K562 (cell line): ENCODE measurements at regions of chr21 and their contacts with region 1.

Region 1: DNA sequence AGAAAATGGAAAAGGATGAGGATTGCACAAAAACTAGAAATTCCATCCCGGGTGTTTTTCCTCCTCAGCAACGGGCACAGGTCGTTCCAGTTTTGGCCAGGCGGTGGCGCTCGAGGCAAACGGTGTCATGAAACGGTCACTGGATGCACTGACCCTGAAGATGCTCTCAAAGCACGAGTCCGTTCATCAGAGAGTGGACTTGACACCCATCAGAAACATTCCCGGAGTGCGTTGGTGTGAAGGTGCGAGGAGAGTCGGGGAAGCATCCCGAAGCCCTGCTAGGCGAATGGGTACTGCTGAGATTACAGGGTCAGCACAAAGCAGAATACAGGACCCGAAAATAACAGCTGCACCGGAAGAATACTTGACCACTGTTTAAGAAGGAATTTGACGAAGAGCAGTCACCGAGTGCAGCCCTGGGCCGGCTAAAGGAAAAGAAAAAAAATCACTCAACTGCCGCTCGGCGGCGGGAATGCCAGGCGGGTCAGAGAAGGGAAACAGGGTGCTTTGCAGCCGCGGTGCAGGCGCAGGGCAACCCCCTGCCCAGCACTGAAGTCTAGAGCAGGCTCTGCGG is 71.7 kb upstream of the ETS2 start:
- DNase-seq: peak; percentile 75 to 82 (median 78)
- ATAC-seq: peak; percentile 96
- H3K4me3 ChIP-seq: no peak overlapping the region
- H3K27ac ChIP-seq: no peak overlapping the region
- H3K4me1 ChIP-seq: no peaks in the 10 kb centered on the region
- H3K27me3 ChIP-seq: peaks cover 7% of the 10 kb centered on the region in 2 experiments; a peak in 4 of 5 replicates
- CTCF ChIP-seq: peak; percentile 90 to 97 (median 96)
- EP300 ChIP-seq: no peak
- POLR2A ChIP-seq: no peak
- RAD21 ChIP-seq: peak; percentile 97 to 99

Region 2: DNA sequence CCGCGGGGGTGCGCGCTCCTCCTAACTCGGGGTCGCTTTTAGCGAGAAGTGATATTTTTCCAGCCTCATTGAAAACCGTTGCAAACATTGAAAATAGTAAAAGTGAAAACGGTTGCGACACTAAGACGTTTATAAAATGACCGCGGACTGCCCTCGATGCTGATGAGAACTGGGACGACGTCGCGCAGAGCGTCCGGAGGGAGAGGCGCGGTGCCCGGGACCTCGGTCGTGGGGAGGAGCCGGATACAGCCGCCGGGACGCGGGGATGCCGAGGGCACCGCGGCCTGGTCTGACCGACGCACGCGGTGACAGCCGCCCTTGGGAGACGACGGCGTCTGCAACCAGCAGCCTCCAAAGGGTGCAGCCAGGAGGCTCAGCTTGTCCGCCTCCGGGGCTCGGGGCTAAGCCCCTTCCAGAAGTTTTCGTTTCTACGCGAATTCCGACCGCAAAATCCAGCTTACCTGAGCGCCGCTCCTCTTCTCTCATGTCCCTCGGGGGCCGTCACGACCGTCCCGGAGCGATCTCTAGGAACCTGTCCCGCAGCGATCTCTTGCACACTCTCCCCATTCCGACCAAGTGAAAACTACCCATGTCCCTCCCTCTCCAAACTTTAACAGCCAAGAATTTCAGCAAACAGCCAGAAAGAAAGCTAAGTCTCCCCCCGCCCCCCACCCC is 72.7 kb before region 1 on chr21:
- CTCF ChIA-PET with region 1: no interaction called
- POLR2A ChIA-PET with region 1: no interaction called
- in situ Hi-C with region 1: no loop called
- intact Hi-C with region 1: no loop called
- DNase-seq: no peak
- ATAC-seq: no peak
- H3K4me3 ChIP-seq: no peak overlapping the region
- H3K27ac ChIP-seq: no peak overlapping the region
- H3K4me1 ChIP-seq: no peaks in the 10 kb centered on the region
- H3K27me3 ChIP-seq: peaks cover 16 to 21% of the 10 kb centered on the region in 2 experiments
- CTCF ChIP-seq: no peak
- EP300 ChIP-seq: no peak
- POLR2A ChIP-seq: no peak
- RAD21 ChIP-seq: no peak

Region 3: GRCh38 chr21:38797470-38797869 is 63.4 kb after region 1 on chr21:
- CTCF ChIA-PET with region 1: no interaction called
- POLR2A ChIA-PET with region 1: no interaction called
- in situ Hi-C with region 1: no loop called
- intact Hi-C with region 1: loop called (anchors 2 kb)
- DNase-seq: peak; percentile 74 to 89 (median 81)
- ATAC-seq: peak; percentile 82
- H3K4me3 ChIP-seq: no peak overlapping the region
- H3K27ac ChIP-seq: peak overlapping the region; percentile 2; the same call in 2 of the 3 replicates
- H3K4me1 ChIP-seq: peaks cover 20 to 38% of the 10 kb centered on the region in 2 experiments
- H3K27me3 ChIP-seq: no peaks in the 10 kb centered on the region
- CTCF ChIP-seq: no peak
- EP300 ChIP-seq: no peak
- POLR2A ChIP-seq: no peak
- RAD21 ChIP-seq: peak in 1 of 2 experiments; percentile 20; a peak in 1 of 4 replicates

Region 4: DNA sequence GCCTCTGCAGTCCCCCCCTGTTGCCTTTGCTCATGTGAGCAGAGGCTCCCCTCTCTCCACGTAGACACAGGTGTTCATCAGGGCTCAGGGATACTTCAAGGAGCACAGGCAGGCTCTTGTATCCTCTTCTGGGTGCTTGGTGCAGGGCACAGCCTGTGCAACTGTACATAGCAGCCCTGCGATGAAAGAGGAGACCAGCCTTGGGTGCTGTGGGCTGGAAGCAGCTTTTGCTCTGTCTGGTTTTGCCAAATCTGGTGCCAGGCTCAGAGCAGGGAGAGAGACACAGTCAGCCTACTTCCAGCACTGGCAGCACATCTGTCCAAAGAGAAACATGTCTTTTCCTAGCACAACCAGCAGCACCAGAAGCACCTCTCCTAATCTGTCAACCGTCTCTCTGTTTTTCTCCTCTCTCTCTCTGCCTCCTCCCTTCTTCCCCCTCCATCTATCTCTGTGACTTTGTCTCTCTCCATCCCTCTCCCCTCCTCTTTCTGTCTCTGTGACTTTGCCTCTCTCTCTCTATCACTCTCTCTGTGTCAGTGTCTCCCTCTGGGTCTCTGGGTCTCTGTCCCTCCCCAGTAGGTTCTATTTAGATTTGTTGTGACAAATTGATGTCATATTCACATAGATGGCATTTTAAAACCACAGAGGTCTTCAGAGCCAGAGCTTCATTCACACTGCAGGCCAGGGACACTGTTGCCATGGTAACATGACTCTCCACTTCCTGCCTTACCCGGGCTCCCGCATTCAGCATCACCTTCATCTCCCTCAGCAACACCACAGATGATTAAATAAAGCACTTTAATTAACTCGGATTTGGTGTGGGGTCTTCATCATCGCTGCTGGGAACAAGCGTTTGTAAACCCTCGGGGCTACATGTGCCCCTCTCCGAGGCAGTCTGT is 204.0 kb after region 1 on chr21:
- CTCF ChIA-PET with region 1: no interaction called
- POLR2A ChIA-PET with region 1: no interaction called
- in situ Hi-C with region 1: no loop called
- intact Hi-C with region 1: loop called (anchors 10 kb)
- DNase-seq: no peak
- ATAC-seq: no peak
- H3K4me3 ChIP-seq: no peak overlapping the region
- H3K27ac ChIP-seq: no peak overlapping the region
- H3K4me1 ChIP-seq: no peaks in the 10 kb centered on the region
- H3K27me3 ChIP-seq: peaks cover 59 to 61% of the 10 kb centered on the region in 2 experiments
- CTCF ChIP-seq: no peak
- EP300 ChIP-seq: no peak
- POLR2A ChIP-seq: no peak
- RAD21 ChIP-seq: no peak

Region 5: DNA sequence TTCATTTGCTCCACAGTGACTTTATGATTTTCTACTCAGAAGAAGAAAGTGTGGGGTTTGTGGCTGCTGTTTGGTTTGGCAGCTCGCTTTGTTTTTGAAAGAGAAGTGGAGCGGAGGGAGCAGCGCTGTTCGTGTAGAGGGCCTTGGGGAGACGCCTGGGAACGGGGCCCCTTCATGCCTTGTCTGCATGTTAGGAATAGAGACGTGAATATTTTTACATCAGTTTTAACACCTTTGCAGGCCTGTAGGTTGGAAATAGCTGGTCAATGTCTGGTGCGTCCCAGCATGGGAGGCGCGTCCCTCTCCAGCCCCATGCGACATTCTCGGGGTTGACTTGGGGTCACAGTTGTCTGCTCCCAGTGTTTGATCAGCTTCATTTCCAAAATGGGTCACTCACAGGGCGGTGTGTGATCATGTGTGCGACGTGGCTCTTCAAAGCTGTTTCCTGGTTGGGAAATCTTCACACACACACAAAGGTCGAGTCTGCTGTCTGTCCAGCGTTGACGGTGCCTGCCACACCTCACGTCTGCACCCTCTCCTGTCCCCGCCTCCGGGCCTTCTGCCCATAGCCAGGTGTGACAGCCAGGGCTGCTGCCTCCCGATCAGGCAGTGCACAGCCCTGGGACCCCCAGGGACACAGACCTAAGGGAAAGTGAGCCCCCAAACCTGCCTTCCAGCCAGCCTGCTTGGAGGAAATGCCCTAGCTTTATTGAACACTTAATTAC is 300.0 kb after region 1 on chr21:
- CTCF ChIA-PET with region 1: no interaction called
- POLR2A ChIA-PET with region 1: no interaction called
- in situ Hi-C with region 1: no loop called
- intact Hi-C with region 1: loop called (anchors 10 kb)
- DNase-seq: no peak
- ATAC-seq: no peak
- H3K4me3 ChIP-seq: no peak overlapping the region
- H3K27ac ChIP-seq: no peak overlapping the region
- H3K4me1 ChIP-seq: peaks cover 0 to 7% of the 10 kb centered on the region in 2 experiments; a peak in 1 of 5 replicates
- H3K27me3 ChIP-seq: peaks cover 44 to 60% of the 10 kb centered on the region in 2 experiments
- CTCF ChIP-seq: no peak
- EP300 ChIP-seq: no peak
- POLR2A ChIP-seq: no peak
- RAD21 ChIP-seq: no peak

Region 6: GRCh38 chr21:39137248-39138178 is 403.5 kb after region 1 on chr21:
- CTCF ChIA-PET with region 1: interaction called, 29 read pairs
- POLR2A ChIA-PET with region 1: interaction called, 3 read pairs
- in situ Hi-C with region 1: loop called (anchors 5 kb)
- intact Hi-C with region 1: loop called (anchors 1 kb)
- DNase-seq: peak in 3 of 4 experiments; percentile 32 to 72 (median 71)
- ATAC-seq: peak; percentile 85
- H3K4me3 ChIP-seq: no peak overlapping the region
- H3K27ac ChIP-seq: no peak overlapping the region
- H3K4me1 ChIP-seq: peaks cover 0 to 6% of the 10 kb centered on the region in 2 experiments; a peak in 3 of 5 replicates
- H3K27me3 ChIP-seq: peaks cover 14 to 29% of the 10 kb centered on the region in 2 experiments; a peak in 4 of 5 replicates
- CTCF ChIP-seq: peak; percentile 34 to 47 (median 39); a peak in 4 of 6 replicates
- EP300 ChIP-seq: peak; percentile 14; the same call in 1 of the 2 replicates
- POLR2A ChIP-seq: no peak
- RAD21 ChIP-seq: peak; percentile 24 to 42; a peak in 3 of 4 replicates